Activated CD4-positive, alpha-beta T cell treated with anti-CD3 and anti-CD28 coated beads for 36 hours (primary cell): ENCODE measurements at regions of chr3 and their contacts with region 1.

Region 1: DNA sequence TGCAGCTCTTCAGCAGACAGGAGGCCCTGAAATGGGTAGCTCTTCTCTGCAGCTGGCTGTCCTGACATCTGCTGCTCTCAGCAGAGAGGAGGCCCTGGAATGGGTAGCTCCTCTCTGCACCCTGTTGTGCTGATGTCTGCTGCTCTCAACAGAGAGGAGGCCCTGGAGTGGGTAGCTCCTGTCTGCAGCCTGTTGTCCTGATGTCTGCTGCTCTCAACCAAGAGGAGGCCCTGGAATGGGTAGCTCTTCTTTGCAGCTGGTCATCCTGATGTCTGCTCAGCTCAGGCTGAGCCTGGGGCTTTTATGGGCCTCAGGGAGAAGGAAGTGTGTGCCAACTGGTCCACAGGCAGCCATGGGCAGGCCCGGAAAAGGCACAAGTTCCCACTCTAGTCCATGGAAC is 66.6 kb downstream of the PIK3CB start:
- DNase-seq: peak; percentile 29
- ATAC-seq: no peak
- H3K4me3 Mint-ChIP-seq: no peak overlapping the region
- H3K27ac Mint-ChIP-seq: no peak overlapping the region
- H3K4me1 Mint-ChIP-seq: peaks cover 28% of the 10 kb centered on the region
- H3K27me3 Mint-ChIP-seq: no peaks in the 10 kb centered on the region

Region 2: DNA sequence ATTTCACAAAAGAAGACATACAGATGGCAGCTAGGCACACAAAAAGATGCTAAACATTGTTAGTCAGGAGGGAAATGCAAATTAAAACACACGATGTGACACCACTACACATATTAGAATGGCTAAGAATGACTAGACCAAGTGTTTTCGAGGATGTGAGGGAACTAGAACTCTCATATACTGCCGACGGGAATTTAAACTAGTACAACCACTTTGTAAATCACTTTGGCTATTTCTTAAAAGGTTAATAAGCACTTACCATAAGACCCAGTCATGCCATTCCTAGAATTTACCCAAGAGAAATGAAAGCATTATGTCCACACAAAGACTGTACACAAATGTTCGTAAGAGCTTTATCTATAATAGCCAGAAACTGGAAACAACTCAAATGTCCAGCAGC is 179.7 kb before region 1 on chr3:
- CTCF ChIA-PET with region 1: no interaction called
- POLR2A ChIA-PET with region 1: no interaction called
- intact Hi-C with region 1: no loop called
- DNase-seq: no peak
- ATAC-seq: no peak
- H3K4me3 Mint-ChIP-seq: no peak overlapping the region
- H3K27ac Mint-ChIP-seq: no peak overlapping the region
- H3K4me1 Mint-ChIP-seq: peaks cover 25% of the 10 kb centered on the region
- H3K27me3 Mint-ChIP-seq: no peaks in the 10 kb centered on the region

Region 3: DNA sequence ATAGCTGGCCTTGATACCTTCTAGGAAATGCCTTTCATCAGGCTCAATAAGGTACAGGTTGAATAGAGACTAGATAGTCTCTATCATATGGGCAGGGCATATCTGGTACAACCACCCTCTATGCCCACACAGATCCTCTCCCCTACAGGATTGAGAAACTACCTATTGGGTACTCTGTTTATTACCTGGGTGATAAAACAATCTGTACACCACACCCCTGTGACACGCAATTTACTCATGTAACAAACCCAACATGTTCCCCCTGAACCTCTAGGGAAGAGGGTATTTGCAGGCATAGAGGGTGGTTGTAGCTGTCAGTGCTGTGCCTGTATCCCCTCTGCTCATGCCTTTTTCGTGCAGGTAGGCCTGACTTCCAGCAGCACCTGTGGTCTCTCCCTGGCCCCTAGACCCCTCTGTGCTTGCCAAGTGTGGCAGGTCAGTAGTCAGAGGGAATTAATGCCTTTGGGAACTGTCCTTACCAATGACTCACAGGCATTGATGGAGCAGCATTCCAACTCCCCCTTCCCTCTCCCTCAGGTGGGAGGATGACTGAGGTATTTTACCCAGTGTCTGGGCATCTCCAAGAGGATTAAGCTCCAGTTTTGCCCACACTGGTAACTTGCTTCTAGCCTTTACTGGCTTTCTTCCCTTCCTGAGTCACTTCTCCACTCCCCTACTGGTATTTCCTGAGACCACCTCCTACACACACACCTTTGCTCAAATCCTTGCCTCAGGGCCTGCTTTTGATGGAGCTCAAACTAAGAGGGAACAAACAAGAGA is 1185.2 kb after region 1 on chr3:
- CTCF ChIA-PET with region 1: no interaction called
- POLR2A ChIA-PET with region 1: interaction called, 11 read pairs
- intact Hi-C with region 1: no loop called
- DNase-seq: no peak
- ATAC-seq: no peak
- H3K4me3 Mint-ChIP-seq: no peak overlapping the region
- H3K27ac Mint-ChIP-seq: no peak overlapping the region
- H3K4me1 Mint-ChIP-seq: no peaks in the 10 kb centered on the region
- H3K27me3 Mint-ChIP-seq: peaks cover 14% of the 10 kb centered on the region